ENCODE measurements at regions of chr20 and their contacts with region 1.

Region 1: GRCh38 chr20:31851240-31851955 is 6.0 kb upstream of the FOXS1 start:
- DNase-seq: no peak
- ATAC-seq: no peak

Region 2: GRCh38 chr20:31951530-31952453 is 100.4 kb after region 1 on chr20 and contains the start of gene PDRG1:
- intact Hi-C with region 1: loop called (anchors 5 kb)
- DNase-seq: peak; percentile 97
- ATAC-seq: peak; percentile 99
- total RNA-seq, gene PDRG1: 18.5 TPM